ENCODE measurements at regions of chr22 and their contacts with region 1.

Region 1: GRCh38 chr22:46737976-46738646 is at the start of gene CERK:
- DNase-seq: peak; percentile 62
- H3K4me3 Mint-ChIP-seq: peak within 1 kb of the TSS; percentile 100
- H3K27ac Mint-ChIP-seq: peak within 1 kb of the TSS; percentile 99
- H3K4me1 Mint-ChIP-seq: peaks cover 34% of the 10 kb centered on the region
- H3K27me3 Mint-ChIP-seq: no peaks in the 10 kb centered on the region
- total RNA-seq, gene CERK: 57.1 and 62.8 TPM in 2 replicates

Region 2: DNA sequence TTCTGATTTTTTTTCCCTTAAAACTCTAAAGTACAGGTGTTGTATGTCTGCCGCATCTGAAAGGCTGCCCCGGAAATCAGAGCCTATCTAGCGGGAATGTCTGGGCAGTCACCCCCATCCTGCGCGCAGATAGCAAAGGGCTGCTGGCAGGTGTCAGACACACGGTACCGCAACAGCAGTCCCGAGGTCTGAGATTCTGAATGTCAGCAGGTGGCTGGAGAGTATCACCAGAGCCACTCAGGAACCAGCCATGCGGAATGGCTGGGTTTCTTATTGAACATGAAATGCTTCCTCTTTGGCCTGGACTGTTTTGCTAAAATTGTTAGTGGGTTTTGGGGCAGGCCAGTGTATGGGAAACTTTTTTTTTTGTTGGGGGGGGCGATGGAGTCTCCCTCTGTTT is 53.4 kb before region 1 on chr22:
- intact Hi-C with region 1: no loop called
- DNase-seq: no peak
- H3K4me3 Mint-ChIP-seq: no peak overlapping the region
- H3K27ac Mint-ChIP-seq: no peak overlapping the region
- H3K4me1 Mint-ChIP-seq: peaks cover 9% of the 10 kb centered on the region
- H3K27me3 Mint-ChIP-seq: no peaks in the 10 kb centered on the region

Region 3: DNA sequence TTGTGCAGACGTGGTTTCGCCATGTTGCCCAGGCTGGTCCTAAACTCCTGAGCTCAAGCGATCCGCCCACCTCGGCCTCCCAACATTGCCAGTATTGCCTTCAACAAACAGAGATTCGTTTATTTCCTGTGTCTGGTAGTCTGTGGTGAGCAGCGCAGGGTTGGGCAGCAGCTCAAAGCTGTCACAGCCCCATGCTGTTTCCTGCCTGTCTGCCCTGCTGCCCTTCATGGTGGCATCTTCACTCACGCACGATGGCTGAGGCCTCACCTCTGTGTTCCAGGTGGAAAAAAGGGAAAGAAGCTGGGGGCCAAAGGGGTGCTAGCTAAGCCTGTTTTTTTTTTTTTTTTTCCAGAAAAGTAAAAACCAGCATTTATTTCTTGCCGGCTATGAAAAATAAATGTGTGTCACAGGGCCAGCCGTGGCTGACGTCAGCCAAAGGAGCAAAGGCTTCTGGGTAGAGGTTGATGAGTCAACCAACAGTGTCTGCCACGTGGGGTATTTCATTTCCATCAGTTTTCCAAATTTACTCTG is 53.2 kb after region 1 on chr22:
- intact Hi-C with region 1: loop called (anchors 5 kb)
- DNase-seq: peak; percentile 72
- H3K4me3 Mint-ChIP-seq: peak overlapping the region; percentile 75
- H3K27ac Mint-ChIP-seq: peak overlapping the region; percentile 100
- H3K4me1 Mint-ChIP-seq: peaks cover 39% of the 10 kb centered on the region
- H3K27me3 Mint-ChIP-seq: no peaks in the 10 kb centered on the region

Region 4: GRCh38 chr22:46803031-46803880 is 65.1 kb after region 1 on chr22:
- intact Hi-C with region 1: loop called (anchors 1 kb)
- DNase-seq: peak; percentile 53
- H3K4me3 Mint-ChIP-seq: no peak overlapping the region
- H3K27ac Mint-ChIP-seq: no peak overlapping the region
- H3K4me1 Mint-ChIP-seq: peaks cover 34% of the 10 kb centered on the region
- H3K27me3 Mint-ChIP-seq: no peaks in the 10 kb centered on the region

Region 5: GRCh38 chr22:46941968-46942798 is 204.1 kb after region 1 on chr22:
- intact Hi-C with region 1: no loop called
- DNase-seq: no peak
- H3K4me3 Mint-ChIP-seq: no peak overlapping the region
- H3K27ac Mint-ChIP-seq: no peak overlapping the region
- H3K4me1 Mint-ChIP-seq: peaks cover 2% of the 10 kb centered on the region
- H3K27me3 Mint-ChIP-seq: no peaks in the 10 kb centered on the region

Measured in activated T-helper 2 cell treated with anti-CD3 and anti-CD28 coated beads, Interferon-gamma antibody, Interleukin-2, Interleukin-4, amounts not matched to agents 10 μg/mL and 5 μg/mL and 100 μg/mL, durations not matched to agents 14 hours and 24 hours and 36 hours (primary cell).